ENCODE measurements at regions of chr15 and their contacts with region 1.

Region 1: GRCh38 chr15:101288908-101289513 is 6.0 kb downstream of the SNRPA1 start:
- DNase-seq: peak; percentile 75
- ATAC-seq: no peak
- H3K4me3 ChIP-seq: no peak overlapping the region
- H3K4me3 Mint-ChIP-seq: no peak overlapping the region
- H3K27ac ChIP-seq: peak overlapping the region in 1 of 2 donors; percentile 4
- H3K27ac Mint-ChIP-seq: peak overlapping the region; percentile 27
- H3K4me1 ChIP-seq: peaks cover 18 to 23% of the 10 kb centered on the region in 2 donors
- H3K4me1 Mint-ChIP-seq: peaks cover 39% of the 10 kb centered on the region
- H3K27me3 ChIP-seq: no peaks in the 10 kb centered on the region
- H3K27me3 Mint-ChIP-seq: no peaks in the 10 kb centered on the region
- CTCF ChIP-seq: peak; percentile 80

Region 2: DNA sequence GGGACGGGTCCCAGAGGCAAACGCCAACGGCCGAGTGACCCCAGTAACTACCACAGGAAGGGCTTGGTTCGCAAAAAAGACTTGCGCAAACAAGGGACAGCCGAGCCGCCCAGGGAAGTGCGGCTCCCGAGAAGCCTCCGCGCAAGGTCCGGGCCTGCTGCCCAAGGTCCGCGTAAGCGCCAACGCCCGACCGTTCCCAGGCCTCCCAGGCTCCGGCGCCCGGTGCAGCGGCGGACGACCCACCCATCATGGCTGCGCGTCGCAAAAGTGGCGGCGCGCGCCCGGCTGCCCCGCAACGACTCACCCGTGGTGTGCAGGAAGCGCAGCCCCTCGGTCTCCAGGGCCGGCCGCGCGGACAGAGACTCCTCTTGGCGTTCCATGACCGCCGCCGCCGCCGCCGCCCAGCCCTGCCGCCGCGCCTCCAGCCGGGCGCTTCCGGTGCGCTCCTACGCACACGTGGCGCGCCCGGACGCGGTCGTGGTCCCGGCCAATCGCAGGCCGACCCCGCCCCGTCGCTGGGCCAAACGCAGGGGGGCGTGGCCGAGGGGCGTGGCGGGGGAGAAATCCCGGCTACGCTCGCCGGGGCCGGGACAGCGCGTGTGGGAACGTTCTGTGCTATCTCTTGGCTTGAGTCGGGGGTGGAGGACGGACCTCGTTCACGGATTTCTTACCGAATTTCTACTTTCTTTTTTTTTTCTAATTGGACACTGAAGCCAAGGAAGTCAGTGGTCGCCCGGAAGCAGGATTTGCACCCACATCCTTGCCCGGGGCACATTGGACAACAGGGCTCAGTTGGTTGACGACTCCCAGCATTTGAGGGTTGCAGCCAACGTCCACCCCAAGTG is 11.8 kb before region 1 on chr15 and contains the start of gene SELENOS:
- CTCF ChIA-PET with region 1: interaction called, 19 read pairs
- POLR2A ChIA-PET with region 1: no interaction called
- intact Hi-C with region 1: loop called (anchors 1 kb)
- DNase-seq: peak; percentile 91
- ATAC-seq: peak; percentile 97
- H3K4me3 ChIP-seq: peak within 1 kb of the TSS; percentile 68 to 96 (median 84)
- H3K4me3 Mint-ChIP-seq: peak within 1 kb of the TSS; percentile 96
- H3K27ac ChIP-seq: peak within 1 kb of the TSS; percentile 39 to 85
- H3K27ac Mint-ChIP-seq: peak within 1 kb of the TSS; percentile 84
- H3K4me1 ChIP-seq: peaks cover 10 to 20% of the 10 kb centered on the region in 2 donors
- H3K4me1 Mint-ChIP-seq: peaks cover 12% of the 10 kb centered on the region
- H3K27me3 ChIP-seq: no peaks in the 10 kb centered on the region
- H3K27me3 Mint-ChIP-seq: no peaks in the 10 kb centered on the region
- CTCF ChIP-seq: no peak
- total RNA-seq, gene SELENOS: 26.8 and 27.3 TPM in 2 replicates

Region 3: GRCh38 chr15:101641166-101641764 is 352.3 kb after region 1 on chr15:
- CTCF ChIA-PET with region 1: interaction called, 159 read pairs
- POLR2A ChIA-PET with region 1: no interaction called
- intact Hi-C with region 1: loop called (anchors 1 kb)
- DNase-seq: peak; percentile 86
- ATAC-seq: peak; percentile 73
- H3K4me3 ChIP-seq: peak overlapping the region in 1 of 5 experiments; percentile 32
- H3K4me3 Mint-ChIP-seq: peak overlapping the region; percentile 33
- H3K27ac ChIP-seq: peak overlapping the region; percentile 37 to 53
- H3K27ac Mint-ChIP-seq: peak overlapping the region; percentile 82
- H3K4me1 ChIP-seq: peaks cover 18 to 19% of the 10 kb centered on the region in 2 donors
- H3K4me1 Mint-ChIP-seq: peaks cover 18% of the 10 kb centered on the region
- H3K27me3 ChIP-seq: no peaks in the 10 kb centered on the region
- H3K27me3 Mint-ChIP-seq: no peaks in the 10 kb centered on the region
- CTCF ChIP-seq: peak; percentile 93